ENCODE measurements at regions of chr11 and their contacts with region 1.

Region 1: GRCh38 chr11:64331557-64332371 is 8.2 kb upstream of the CCDC88B start:
- DNase-seq: peak; percentile 92 to 93
- ATAC-seq: peak; percentile 77 to 89
- H3K4me3 ChIP-seq: no peak overlapping the region
- H3K27ac ChIP-seq: peak overlapping the region; percentile 85 to 91
- H3K4me1 ChIP-seq: peaks cover 36% of the 10 kb centered on the region
- CTCF ChIP-seq: peak; percentile 65
- EP300 ChIP-seq: peak in 1 of 2 experiments; percentile 47; a peak in 1 of 5 replicates
- POLR2A ChIP-seq: 0 out of 2 replicates have a peak, but pooled peaks have one; percentile 1
- RAD21 ChIP-seq: peak; percentile 65 to 66

Region 2: DNA sequence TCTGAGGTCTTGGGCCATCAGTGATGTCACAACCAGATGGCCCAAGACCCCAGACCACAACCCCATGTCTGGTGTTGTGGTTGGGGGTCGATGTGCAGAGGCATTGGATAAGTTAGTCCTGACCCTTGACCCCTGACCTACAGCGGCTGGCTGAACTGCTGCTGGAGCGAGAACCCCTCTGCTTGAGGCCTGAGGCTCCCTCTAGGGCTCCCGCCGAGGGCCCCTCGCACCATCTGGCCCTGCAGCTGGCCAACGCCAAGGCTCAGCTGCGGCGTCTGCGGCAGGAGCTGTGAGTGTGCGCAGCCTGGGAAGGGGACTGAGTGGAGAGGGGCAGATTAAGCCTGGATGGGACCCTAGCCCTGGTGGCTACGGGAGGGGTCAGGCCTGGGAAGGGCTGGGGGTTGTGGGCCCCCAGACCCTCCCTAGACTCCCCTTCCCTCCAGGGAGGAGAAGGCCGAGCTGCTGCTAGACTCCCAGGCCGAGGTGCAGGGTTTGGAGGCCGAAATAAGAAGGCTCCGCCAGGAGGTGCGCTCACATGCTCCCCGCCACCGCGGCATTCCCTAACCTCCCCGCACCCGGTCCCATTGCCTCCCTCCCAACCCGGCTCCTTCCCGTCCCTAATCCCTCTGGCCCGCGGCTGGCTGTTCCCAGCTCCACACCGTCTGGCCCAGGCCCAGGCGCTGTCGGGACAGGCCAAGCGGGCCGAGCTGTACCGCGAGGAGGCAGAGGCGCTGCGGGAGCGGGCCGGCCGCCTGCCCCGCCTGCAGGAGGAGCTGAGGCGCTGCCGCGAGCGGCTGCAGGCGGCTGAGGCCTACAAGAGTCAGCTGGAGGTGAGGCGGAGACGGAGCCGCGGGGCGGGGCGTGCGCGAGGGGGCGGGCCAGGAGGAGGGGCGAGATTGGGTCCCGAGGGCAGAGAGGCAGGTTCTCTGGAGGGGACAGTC is 10.4 kb after region 1 on chr11:
- CTCF ChIA-PET with region 1: interaction called, 312 read pairs
- POLR2A ChIA-PET with region 1: interaction called, 8 read pairs
- DNase-seq: peak; percentile 91 to 93
- ATAC-seq: peak; percentile 87 to 93
- H3K4me3 ChIP-seq: peak overlapping the region; percentile 38
- H3K27ac ChIP-seq: peak overlapping the region; percentile 88 to 93
- H3K4me1 ChIP-seq: peaks cover 18% of the 10 kb centered on the region
- CTCF ChIP-seq: peak; percentile 43
- EP300 ChIP-seq: no peak
- POLR2A ChIP-seq: peak; percentile 85
- RAD21 ChIP-seq: peak; percentile 27 to 44; a peak in 3 of 5 replicates

Region 3: GRCh38 chr11:64489831-64490441 is 158.2 kb after region 1 on chr11:
- CTCF ChIA-PET with region 1: no interaction called
- POLR2A ChIA-PET with region 1: no interaction called
- DNase-seq: peak; percentile 59 to 80
- ATAC-seq: peak; percentile 92 to 98
- H3K4me3 ChIP-seq: no peak overlapping the region
- H3K27ac ChIP-seq: no peak overlapping the region
- H3K4me1 ChIP-seq: no peaks in the 10 kb centered on the region
- CTCF ChIP-seq: peak; percentile 79
- EP300 ChIP-seq: no peak
- POLR2A ChIP-seq: no peak
- RAD21 ChIP-seq: peak; percentile 81 to 82

Measured in A549 (cell line).